Activated CD4-positive, alpha-beta T cell treated with anti-CD3 and anti-CD28 coated beads for 36 hours (primary cell): ENCODE measurements at regions of chr12 and their contacts with region 1.

Region 1: GRCh38 chr12:4421590-4422031 is 24.0 kb downstream of the FGF6 start:
- DNase-seq: peak; percentile 16
- ATAC-seq: peak; percentile 61
- H3K4me3 Mint-ChIP-seq: no peak overlapping the region
- H3K27ac Mint-ChIP-seq: no peak overlapping the region
- H3K4me1 Mint-ChIP-seq: no peaks in the 10 kb centered on the region
- H3K27me3 Mint-ChIP-seq: peaks cover 5% of the 10 kb centered on the region

Region 2: DNA sequence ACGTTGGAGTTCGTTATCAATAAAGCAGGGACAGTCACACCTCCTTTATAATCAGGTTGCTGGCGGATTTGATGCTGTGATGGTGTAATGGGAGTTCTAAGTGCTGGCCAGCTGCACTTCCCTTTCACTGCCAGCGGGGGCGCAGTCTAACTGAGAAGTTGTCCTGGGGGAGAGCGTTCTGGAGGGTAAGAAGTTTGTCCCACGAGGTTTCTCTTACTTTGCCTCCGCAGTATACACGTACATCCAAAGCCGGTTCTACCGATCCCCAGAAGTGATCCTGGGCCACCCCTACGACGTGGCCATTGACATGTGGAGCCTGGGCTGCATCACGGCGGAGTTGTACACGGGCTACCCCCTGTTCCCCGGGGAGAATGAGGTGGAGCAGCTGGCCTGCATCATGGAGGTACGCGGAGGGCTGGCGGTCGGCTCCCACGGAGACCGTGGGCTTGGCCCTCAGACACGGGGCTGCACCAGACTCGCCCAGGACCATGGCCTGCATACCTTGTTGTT is 183.1 kb after region 1 on chr12:
- CTCF ChIA-PET with region 1: interaction called, 11 read pairs
- POLR2A ChIA-PET with region 1: no interaction called
- intact Hi-C with region 1: no loop called
- DNase-seq: peak; percentile 90
- ATAC-seq: peak; percentile 98
- H3K4me3 Mint-ChIP-seq: peak overlapping the region; percentile 95
- H3K27ac Mint-ChIP-seq: peak overlapping the region; percentile 96
- H3K4me1 Mint-ChIP-seq: peaks cover 18% of the 10 kb centered on the region
- H3K27me3 Mint-ChIP-seq: no peaks in the 10 kb centered on the region